ENCODE measurements at regions of chr5 and their contacts with region 1.

Region 1: DNA sequence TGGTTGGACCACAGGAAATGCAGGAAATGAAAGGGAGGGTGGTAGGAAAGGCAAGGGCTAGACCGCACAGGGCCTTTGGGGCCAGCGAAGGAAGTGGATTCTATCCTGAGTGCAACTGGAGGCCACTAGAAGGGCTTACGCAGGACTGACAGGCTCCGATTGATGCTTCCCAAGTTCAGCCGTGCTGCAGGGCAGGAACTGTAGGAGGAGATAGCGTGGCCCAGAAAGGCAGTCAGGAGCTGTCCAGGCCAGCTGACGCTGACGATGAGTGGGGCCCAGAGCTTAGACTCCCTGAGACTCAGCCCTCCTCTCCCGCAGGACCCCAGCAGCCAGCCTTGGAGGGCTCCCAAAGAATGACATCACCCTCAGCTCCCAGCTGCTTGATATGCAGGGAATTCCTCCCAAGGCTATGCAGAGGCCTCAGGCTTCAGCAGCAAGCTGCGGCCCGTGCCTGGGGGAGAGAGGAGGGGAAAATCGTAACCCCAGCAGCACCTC is 48.8 kb downstream of the KCNIP1 start:
- DNase-seq: peak; percentile 56 to 70 (median 61)
- ATAC-seq: peak; percentile 73
- H3K4me3 ChIP-seq: no peak overlapping the region
- H3K4me1 ChIP-seq: no peaks in the 10 kb centered on the region
- CTCF ChIP-seq: no peak

Region 2: DNA sequence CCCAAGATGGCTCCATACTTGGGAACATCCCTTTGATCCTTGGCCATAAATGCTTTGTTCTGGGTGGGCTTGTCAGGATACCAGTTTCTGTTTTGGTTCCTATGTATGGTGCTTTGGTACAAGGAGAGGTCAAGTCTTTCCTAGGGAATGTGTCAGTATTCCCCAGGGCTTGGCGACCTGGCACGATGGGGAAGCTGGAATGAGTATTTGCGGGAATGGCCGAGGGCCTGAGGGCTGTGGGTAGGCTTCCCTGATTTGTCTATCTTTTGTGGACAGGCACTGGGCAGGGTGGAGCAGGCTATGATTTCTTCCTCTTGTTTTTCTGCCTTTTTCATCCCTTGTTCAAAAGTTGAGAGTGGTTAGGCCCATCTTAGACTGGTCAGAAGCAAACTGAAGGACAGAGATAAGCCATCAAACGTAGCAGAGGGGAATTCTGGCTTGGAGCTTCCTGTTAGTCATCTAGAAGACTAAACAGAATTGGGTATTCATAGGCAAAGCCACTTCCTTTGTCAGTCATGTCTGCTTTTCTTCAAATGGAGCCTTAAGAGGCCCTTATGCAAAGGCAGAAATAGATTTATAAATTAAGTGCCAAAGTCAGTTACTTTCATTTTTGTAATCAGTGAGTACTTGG is 901.9 kb before region 1 on chr5:
- intact Hi-C with region 1: no loop called
- DNase-seq: no peak
- ATAC-seq: peak; percentile 27
- H3K4me3 ChIP-seq: no peak overlapping the region
- H3K4me1 ChIP-seq: peaks cover 2% of the 10 kb centered on the region
- CTCF ChIP-seq: no peak

Region 3: GRCh38 chr5:170606941-170607340 is 54.3 kb after region 1 on chr5:
- intact Hi-C with region 1: loop called in 1 of 2 experiments (anchors 2 kb)
- DNase-seq: no peak
- ATAC-seq: no peak
- H3K4me3 ChIP-seq: no peak overlapping the region
- H3K4me1 ChIP-seq: no peaks in the 10 kb centered on the region
- CTCF ChIP-seq: no peak

Measured in mucosa of descending colon (tissue), 3 donors.